ENCODE measurements at regions of chr7 and their contacts with region 1.

Region 1: DNA sequence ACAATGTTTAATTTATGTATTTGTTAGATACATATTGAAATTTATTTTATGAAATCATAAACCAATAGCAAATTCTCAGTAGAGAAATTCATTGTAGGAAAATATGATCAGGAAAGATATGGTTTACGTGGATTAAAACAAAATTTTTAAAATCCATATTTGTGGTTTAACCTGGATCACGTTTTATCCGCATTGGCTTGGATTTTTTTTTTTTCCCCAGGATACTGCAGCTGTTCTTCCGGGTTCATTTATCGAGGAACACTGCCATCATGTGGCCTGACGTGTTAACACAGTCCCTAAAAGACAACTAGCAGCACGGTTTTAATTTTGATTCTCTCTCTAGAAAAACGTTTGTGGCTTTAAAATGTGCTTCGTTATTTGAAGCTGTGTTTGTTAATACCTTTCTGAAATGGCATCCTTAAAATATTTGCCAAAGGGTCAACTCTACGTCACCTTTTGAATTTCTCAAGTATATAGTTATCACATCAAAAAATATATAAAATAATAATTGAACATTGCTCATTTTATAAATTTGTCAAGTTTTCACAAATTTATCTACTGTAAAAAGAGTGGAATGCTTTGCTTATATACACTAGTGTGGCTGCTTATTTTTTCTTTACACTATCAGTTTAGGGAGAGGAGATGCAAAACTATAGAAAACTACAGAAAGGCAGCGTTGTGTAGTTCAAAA is 8.7 kb upstream of the ASB4 start:
- DNase-seq: peak; percentile 76
- ATAC-seq: peak; percentile 48
- H3K4me3 ChIP-seq: no peak overlapping the region
- H3K27ac ChIP-seq: no peak overlapping the region
- H3K4me1 ChIP-seq: no peaks in the 10 kb centered on the region
- H3K27me3 ChIP-seq: no peaks in the 10 kb centered on the region
- CTCF ChIP-seq: peak; percentile 86

Region 2: GRCh38 chr7:94449148-94449725 is 1027.8 kb before region 1 on chr7:
- CTCF ChIA-PET with region 1: interaction called, 8 read pairs
- POLR2A ChIA-PET with region 1: no interaction called
- intact Hi-C with region 1: loop called (anchors 1 kb)
- DNase-seq: peak; percentile 58
- ATAC-seq: peak; percentile 48
- H3K4me3 ChIP-seq: no peak overlapping the region
- H3K27ac ChIP-seq: no peak overlapping the region
- H3K4me1 ChIP-seq: peaks cover 4% of the 10 kb centered on the region; the same call in 1 of the 2 replicates
- H3K27me3 ChIP-seq: no peaks in the 10 kb centered on the region
- CTCF ChIP-seq: peak; percentile 76

Region 3: GRCh38 chr7:95045236-95045923 is 431.7 kb before region 1 on chr7:
- CTCF ChIA-PET with region 1: no interaction called
- POLR2A ChIA-PET with region 1: no interaction called
- intact Hi-C with region 1: loop called (anchors 5 kb)
- DNase-seq: peak; percentile 66
- ATAC-seq: peak; percentile 99
- H3K4me3 ChIP-seq: no peak overlapping the region
- H3K27ac ChIP-seq: no peak overlapping the region
- H3K4me1 ChIP-seq: no peaks in the 10 kb centered on the region
- H3K27me3 ChIP-seq: no peaks in the 10 kb centered on the region
- CTCF ChIP-seq: peak; percentile 74

Region 4: GRCh38 chr7:95246831-95247370 is 230.1 kb before region 1 on chr7:
- CTCF ChIA-PET with region 1: no interaction called
- POLR2A ChIA-PET with region 1: no interaction called
- intact Hi-C with region 1: loop called (anchors 5 kb)
- DNase-seq: peak; percentile 73
- ATAC-seq: peak; percentile 86
- H3K4me3 ChIP-seq: no peak overlapping the region
- H3K27ac ChIP-seq: no peak overlapping the region
- H3K4me1 ChIP-seq: peaks cover 4% of the 10 kb centered on the region; the same call in 1 of the 2 replicates
- H3K27me3 ChIP-seq: no peaks in the 10 kb centered on the region
- CTCF ChIP-seq: peak; percentile 85

Region 5: DNA sequence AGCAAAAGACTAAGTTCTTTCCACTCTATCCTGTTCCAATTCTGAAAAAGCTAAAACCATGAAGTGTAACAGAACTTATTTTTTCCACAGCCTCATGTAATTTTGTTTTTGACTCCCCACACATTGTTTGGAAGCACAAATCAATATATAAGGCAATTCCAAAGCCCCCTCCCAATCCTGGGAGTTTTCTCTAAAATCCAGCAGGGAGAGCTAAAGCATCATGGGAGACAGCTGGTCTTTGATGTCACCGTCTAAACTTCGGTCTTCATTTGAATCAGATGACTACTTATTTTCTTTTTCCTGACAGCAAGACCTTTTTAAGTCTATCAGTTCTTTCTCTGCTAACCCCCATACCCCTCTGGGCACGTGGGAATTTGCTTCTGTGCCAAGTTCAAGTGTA is 119.4 kb before region 1 on chr7:
- CTCF ChIA-PET with region 1: interaction called, 3 read pairs
- POLR2A ChIA-PET with region 1: no interaction called
- intact Hi-C with region 1: loop called (anchors 1 kb)
- DNase-seq: peak; percentile 22
- ATAC-seq: no peak
- H3K4me3 ChIP-seq: no peak overlapping the region
- H3K27ac ChIP-seq: no peak overlapping the region
- H3K4me1 ChIP-seq: no peaks in the 10 kb centered on the region
- H3K27me3 ChIP-seq: no peaks in the 10 kb centered on the region
- CTCF ChIP-seq: peak; percentile 42

Region 6: GRCh38 chr7:95421000-95421846 is 55.8 kb before region 1 on chr7:
- CTCF ChIA-PET with region 1: no interaction called
- POLR2A ChIA-PET with region 1: no interaction called
- intact Hi-C with region 1: no loop called
- DNase-seq: no peak
- ATAC-seq: no peak
- H3K4me3 ChIP-seq: no peak overlapping the region
- H3K27ac ChIP-seq: no peak overlapping the region
- H3K4me1 ChIP-seq: no peaks in the 10 kb centered on the region
- H3K27me3 ChIP-seq: no peaks in the 10 kb centered on the region
- CTCF ChIP-seq: no peak

Region 7: DNA sequence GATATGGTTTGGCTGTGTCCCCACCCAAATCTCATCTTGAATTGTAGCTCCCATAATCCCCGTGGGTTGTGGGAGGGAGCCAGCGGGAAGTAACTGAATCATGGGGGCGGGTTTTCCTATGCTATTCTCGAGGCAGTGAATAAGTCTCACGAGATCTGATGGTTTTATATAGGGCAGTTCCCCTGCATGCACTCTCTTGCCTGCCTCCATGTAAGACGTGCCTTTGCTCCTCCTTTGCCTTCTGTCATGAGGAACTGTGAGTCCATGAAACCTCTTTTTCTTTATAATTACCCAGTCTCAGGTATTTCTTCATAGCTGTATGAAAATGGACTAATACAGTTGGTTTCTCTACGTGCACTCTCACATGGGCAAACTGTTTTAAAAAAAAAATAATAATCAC is 637.1 kb after region 1 on chr7:
- CTCF ChIA-PET with region 1: no interaction called
- POLR2A ChIA-PET with region 1: no interaction called
- intact Hi-C with region 1: no loop called
- DNase-seq: no peak
- ATAC-seq: no peak
- H3K4me3 ChIP-seq: no peak overlapping the region
- H3K27ac ChIP-seq: no peak overlapping the region
- H3K4me1 ChIP-seq: no peaks in the 10 kb centered on the region
- H3K27me3 ChIP-seq: no peaks in the 10 kb centered on the region
- CTCF ChIP-seq: no peak